CD4-positive, alpha-beta memory T cell (primary cell): ENCODE measurements at regions of chr11 and their contacts with region 1.

Region 1: GRCh38 chr11:126282736-126283591 is at the start of gene TIRAP:
- DNase-seq: peak; percentile 75 to 81 (median 77)
- H3K4me3 ChIP-seq: peak within 1 kb of the TSS; percentile 83 to 98
- H3K4me3 Mint-ChIP-seq: peak within 1 kb of the TSS; percentile 90 to 99 (median 96)
- H3K27ac ChIP-seq: peak within 1 kb of the TSS; percentile 77
- H3K27ac Mint-ChIP-seq: peak within 1 kb of the TSS; percentile 86 to 99 (median 98)
- H3K4me1 ChIP-seq: peaks cover 43% of the 10 kb centered on the region
- H3K4me1 Mint-ChIP-seq: peaks cover 30 to 63% (median 47%) of the 10 kb centered on the region in 4 donors
- H3K27me3 ChIP-seq: no peaks in the 10 kb centered on the region
- H3K27me3 Mint-ChIP-seq: no peaks in the 10 kb centered on the region
- total RNA-seq, gene TIRAP: 25.4 to 27.4 TPM

Region 2: GRCh38 chr11:125625630-125626287 is 657.2 kb before region 1 on chr11:
- CTCF ChIA-PET with region 1: no interaction called
- POLR2A ChIA-PET with region 1: interaction called, 5 read pairs
- intact Hi-C with region 1: loop called (anchors 10 kb)
- DNase-seq: peak; percentile 81 to 88 (median 85)
- H3K4me3 ChIP-seq: peak overlapping the region; percentile 84 to 98
- H3K4me3 Mint-ChIP-seq: peak overlapping the region; percentile 93 to 100 (median 98)
- H3K27ac ChIP-seq: peak overlapping the region; percentile 95
- H3K27ac Mint-ChIP-seq: peak overlapping the region; percentile 87 to 99 (median 99)
- H3K4me1 ChIP-seq: peaks cover 19% of the 10 kb centered on the region
- H3K4me1 Mint-ChIP-seq: peaks cover 11 to 29% (median 16%) of the 10 kb centered on the region in 4 donors
- H3K27me3 ChIP-seq: no peaks in the 10 kb centered on the region
- H3K27me3 Mint-ChIP-seq: no peaks in the 10 kb centered on the region

Region 3: GRCh38 chr11:126211235-126212088 is 71.5 kb before region 1 on chr11 and contains the starts of genes FAM118B and RPUSD4:
- CTCF ChIA-PET with region 1: no interaction called
- POLR2A ChIA-PET with region 1: interaction called, 4 read pairs
- intact Hi-C with region 1: loop called (anchors 1 kb)
- DNase-seq: peak; percentile 98
- H3K4me3 ChIP-seq: peak within 1 kb of the TSS; percentile 44 to 91
- H3K4me3 Mint-ChIP-seq: peak within 1 kb of the TSS; percentile 99 to 100 (median 99)
- H3K27ac ChIP-seq: peak within 1 kb of the TSS; percentile 67
- H3K27ac Mint-ChIP-seq: peak within 1 kb of the TSS; percentile 91 to 99 (median 98)
- H3K4me1 ChIP-seq: peaks cover 24% of the 10 kb centered on the region
- H3K4me1 Mint-ChIP-seq: peaks cover 27 to 43% (median 32%) of the 10 kb centered on the region in 4 donors
- H3K27me3 ChIP-seq: no peaks in the 10 kb centered on the region
- H3K27me3 Mint-ChIP-seq: no peaks in the 10 kb centered on the region
- total RNA-seq, gene FAM118B: 12.6 to 13.2 TPM
- total RNA-seq, gene RPUSD4: 39.3 to 41.2 TPM

Region 4: GRCh38 chr11:126293726-126294125 is 10.8 kb after region 1 on chr11:
- CTCF ChIA-PET with region 1: no interaction called
- POLR2A ChIA-PET with region 1: interaction called, 13 read pairs
- intact Hi-C with region 1: no loop called
- DNase-seq: no peak
- H3K4me3 ChIP-seq: no peak overlapping the region
- H3K4me3 Mint-ChIP-seq: no peak overlapping the region
- H3K27ac ChIP-seq: no peak overlapping the region
- H3K27ac Mint-ChIP-seq: peak overlapping the region in 4 of 7 donors; percentile 25 to 85 (median 52)
- H3K4me1 ChIP-seq: no peaks in the 10 kb centered on the region
- H3K4me1 Mint-ChIP-seq: peaks cover 5 to 15% (median 9%) of the 10 kb centered on the region in 4 donors
- H3K27me3 ChIP-seq: no peaks in the 10 kb centered on the region
- H3K27me3 Mint-ChIP-seq: no peaks in the 10 kb centered on the region

Region 5: GRCh38 chr11:126355324-126355925 is 72.5 kb after region 1 on chr11 and contains the start of gene ST3GAL4:
- CTCF ChIA-PET with region 1: no interaction called
- POLR2A ChIA-PET with region 1: interaction called, 4 read pairs
- intact Hi-C with region 1: loop called (anchors 5 kb)
- DNase-seq: peak; percentile 38 to 60 (median 51)
- H3K4me3 ChIP-seq: peak within 1 kb of the TSS; percentile 57 to 60
- H3K4me3 Mint-ChIP-seq: peak within 1 kb of the TSS; percentile 82 to 92 (median 88)
- H3K27ac ChIP-seq: peak within 1 kb of the TSS; percentile 60
- H3K27ac Mint-ChIP-seq: peak within 1 kb of the TSS; percentile 10 to 86 (median 39)
- H3K4me1 ChIP-seq: peaks cover 20% of the 10 kb centered on the region
- H3K4me1 Mint-ChIP-seq: peaks cover 12 to 38% (median 18%) of the 10 kb centered on the region in 4 donors
- H3K27me3 ChIP-seq: no peaks in the 10 kb centered on the region
- H3K27me3 Mint-ChIP-seq: no peaks in the 10 kb centered on the region
- total RNA-seq, gene ST3GAL4: 2.6 TPM